Panc1 (cell line): ENCODE measurements at regions of chr17 and their contacts with region 1.

Region 1: DNA sequence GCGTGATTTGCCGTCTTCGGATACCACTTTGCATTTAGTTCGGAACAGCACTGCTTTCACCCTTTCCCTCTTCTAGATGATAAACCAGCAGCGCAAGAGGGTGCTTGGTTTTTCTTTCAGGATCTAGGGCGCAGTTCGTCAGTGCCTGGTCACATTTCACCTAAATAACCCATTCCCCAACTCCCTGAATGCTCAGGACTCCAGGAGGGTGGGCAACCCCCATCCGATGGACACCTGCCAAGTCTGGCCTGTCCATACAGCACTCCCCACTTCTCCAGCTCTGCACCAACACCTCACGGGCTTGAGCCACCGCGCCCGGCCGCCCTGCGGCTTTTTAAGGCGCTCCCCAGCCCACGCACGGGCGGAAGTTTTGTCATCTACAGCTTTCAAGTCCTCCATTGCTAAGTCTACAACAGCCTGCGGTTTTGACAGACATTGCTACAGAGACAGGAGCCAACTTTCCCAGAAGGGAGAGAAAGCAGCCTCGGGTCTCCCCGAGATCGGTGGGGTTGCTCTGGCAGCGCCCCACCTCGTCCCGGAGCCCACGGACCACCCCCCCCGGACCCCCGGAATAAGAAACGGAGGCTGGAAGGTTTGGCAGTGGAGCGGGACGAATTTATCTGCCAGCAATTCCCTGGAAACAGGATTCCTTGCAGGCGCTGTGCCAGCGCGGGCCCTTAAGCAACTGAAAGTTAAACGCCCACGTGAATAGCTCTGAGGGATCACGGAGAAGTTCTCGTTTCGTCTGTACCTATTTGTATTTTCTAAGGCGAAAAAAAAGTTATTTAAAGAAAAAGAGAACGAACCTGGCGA is 38.6 kb upstream of the SLFN13 start:
- DNase-seq: no peak
- ATAC-seq: peak; percentile 73
- H3K4me3 ChIP-seq: peak overlapping the region; percentile 42 to 65
- H3K27ac ChIP-seq: no peak overlapping the region
- H3K4me1 ChIP-seq: 0 out of 2 replicates have a peak, but pooled peaks cover 6% of the 10 kb centered on the region
- H3K27me3 ChIP-seq: peaks cover 2% of the 10 kb centered on the region
- CTCF ChIP-seq: no peak

Region 2: DNA sequence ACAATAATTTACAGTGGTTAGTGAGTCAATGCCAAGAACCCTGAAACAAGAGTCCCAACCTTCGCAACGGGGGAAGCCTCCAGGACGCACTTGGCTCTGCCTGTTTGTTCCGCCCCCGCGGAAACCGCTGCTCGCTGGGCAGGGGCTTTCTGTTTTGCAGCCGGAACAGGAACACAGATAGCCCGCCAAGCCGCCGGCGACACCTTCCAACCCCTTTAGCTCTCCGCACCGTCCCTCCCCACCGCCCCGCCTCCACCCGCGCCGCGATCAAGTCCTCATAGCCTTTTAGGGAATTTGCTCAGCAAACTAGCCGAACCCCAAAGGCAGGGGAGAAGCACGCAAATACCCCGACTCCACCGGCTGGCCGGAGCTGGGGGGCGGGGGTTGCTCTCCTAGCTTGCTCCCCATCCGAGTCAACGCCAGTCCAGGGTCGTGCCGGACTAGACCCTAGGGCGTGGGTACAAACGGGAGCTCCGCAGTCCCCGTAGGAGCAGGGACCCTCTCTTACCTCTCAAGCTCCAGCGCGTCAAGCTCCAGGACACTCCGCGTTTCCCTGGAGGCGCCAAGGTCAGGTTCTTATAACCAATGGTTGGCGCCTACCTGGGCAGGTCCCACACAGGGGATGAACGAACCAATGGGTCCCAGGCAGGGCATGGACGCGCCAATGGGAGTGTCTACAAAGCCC is 38.8 kb before region 1 on chr17 and contains the start of gene SLFN13:
- CTCF ChIA-PET with region 1: no interaction called
- POLR2A ChIA-PET with region 1: interaction called, 12 read pairs
- in situ Hi-C with region 1: no loop called
- intact Hi-C with region 1: no loop called
- DNase-seq: no peak
- ATAC-seq: peak; percentile 98
- H3K4me3 ChIP-seq: peak within 1 kb of the TSS; percentile 66 to 84
- H3K27ac ChIP-seq: peak within 1 kb of the TSS; percentile 82
- H3K4me1 ChIP-seq: peaks cover 5% of the 10 kb centered on the region
- H3K27me3 ChIP-seq: no peaks in the 10 kb centered on the region
- CTCF ChIP-seq: no peak
- total RNA-seq, gene SLFN13: 56.5 TPM

Region 3: DNA sequence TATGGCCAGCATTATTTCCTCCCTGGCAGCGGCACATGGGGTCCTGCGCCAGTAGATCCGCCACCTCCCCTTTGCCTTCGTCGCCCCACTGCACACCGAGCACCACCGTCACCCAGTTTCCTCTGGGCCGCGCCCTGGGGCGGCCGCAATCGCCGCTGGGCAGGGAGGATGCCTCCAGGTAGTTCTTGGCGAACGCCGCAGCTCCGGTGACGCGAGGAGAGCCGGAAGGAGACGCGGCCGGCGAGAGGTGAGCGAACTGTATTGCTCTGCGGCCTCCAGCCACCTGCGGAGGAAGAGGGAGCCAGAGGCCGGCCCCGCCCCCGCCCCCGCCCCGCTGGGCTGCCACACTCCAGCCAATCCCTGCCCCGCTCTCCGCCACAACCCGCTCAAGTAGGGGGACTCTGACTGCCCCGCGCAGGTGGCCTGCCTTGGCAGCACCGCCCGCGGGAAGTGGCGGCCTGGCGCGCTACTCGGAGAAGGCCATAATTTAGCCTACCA is 26.7 kb before region 1 on chr17:
- CTCF ChIA-PET with region 1: no interaction called
- POLR2A ChIA-PET with region 1: no interaction called
- in situ Hi-C with region 1: no loop called
- intact Hi-C with region 1: no loop called
- DNase-seq: no peak
- ATAC-seq: peak; percentile 97
- H3K4me3 ChIP-seq: peak overlapping the region; percentile 40 to 47
- H3K27ac ChIP-seq: no peak overlapping the region
- H3K4me1 ChIP-seq: no peaks in the 10 kb centered on the region
- H3K27me3 ChIP-seq: peaks cover 23% of the 10 kb centered on the region
- CTCF ChIP-seq: no peak

Region 4: DNA sequence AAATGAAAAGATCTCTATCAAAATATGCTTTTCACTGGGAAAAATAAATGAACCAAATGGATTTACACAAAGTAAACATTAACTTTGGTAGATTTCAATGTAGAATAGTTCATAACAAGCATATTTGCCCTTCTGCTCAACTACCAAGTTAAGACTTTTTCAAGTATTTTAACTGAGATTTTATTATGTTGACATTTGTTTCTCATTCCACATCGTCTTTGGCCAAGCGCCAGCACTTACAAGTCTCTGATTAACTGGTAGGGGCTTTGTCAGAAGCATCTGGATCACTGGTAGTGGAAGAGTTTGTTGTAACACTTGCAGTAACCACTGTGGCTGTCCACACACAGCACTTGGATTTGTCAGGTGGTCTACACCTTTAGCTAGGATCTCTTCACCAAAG is 27.4 kb after region 1 on chr17:
- CTCF ChIA-PET with region 1: no interaction called
- POLR2A ChIA-PET with region 1: no interaction called
- in situ Hi-C with region 1: no loop called
- intact Hi-C with region 1: loop called (anchors 2 kb)
- DNase-seq: no peak
- ATAC-seq: no peak
- H3K4me3 ChIP-seq: no peak overlapping the region
- H3K27ac ChIP-seq: no peak overlapping the region
- H3K4me1 ChIP-seq: no peaks in the 10 kb centered on the region
- H3K27me3 ChIP-seq: peaks cover 5% of the 10 kb centered on the region; the same call in 1 of the 2 replicates
- CTCF ChIP-seq: no peak